ENCODE measurements at regions of chr7 and their contacts with region 1.

Region 1: DNA sequence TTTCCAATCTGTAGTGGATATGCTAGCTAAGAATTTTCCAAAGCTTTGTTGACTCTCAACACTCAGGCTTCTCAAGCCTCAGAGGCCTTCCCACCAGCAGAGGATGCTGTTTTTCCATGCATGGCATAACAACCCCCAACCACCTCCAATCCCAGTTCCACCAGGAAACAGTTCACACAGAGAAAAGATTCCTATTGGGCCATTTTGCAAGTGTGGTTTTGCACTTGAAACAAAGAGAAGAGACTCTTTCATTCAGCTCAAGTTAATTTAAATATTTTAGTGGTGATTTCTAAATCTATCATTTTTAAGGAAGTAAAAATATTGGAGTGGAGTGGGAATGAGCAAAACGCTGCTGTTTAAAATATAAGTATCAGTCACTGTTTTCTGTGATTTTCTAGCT is 105.6 kb upstream of the COL1A2 start:
- DNase-seq: peak; percentile 80
- H3K4me3 ChIP-seq: no peak overlapping the region
- H3K27ac ChIP-seq: no peak overlapping the region
- H3K27me3 ChIP-seq: no peaks in the 10 kb centered on the region
- CTCF ChIP-seq: peak; percentile 100

Region 2: GRCh38 chr7:94095316-94096009 is 193.6 kb before region 1 on chr7:
- CTCF ChIA-PET with region 1: no interaction called
- POLR2A ChIA-PET with region 1: no interaction called
- DNase-seq: no peak
- H3K4me3 ChIP-seq: no peak overlapping the region
- H3K27ac ChIP-seq: no peak overlapping the region
- H3K27me3 ChIP-seq: no peaks in the 10 kb centered on the region
- CTCF ChIP-seq: no peak

Region 3: GRCh38 chr7:94142281-94142680 is 146.8 kb before region 1 on chr7:
- CTCF ChIA-PET with region 1: no interaction called
- POLR2A ChIA-PET with region 1: no interaction called
- DNase-seq: no peak
- H3K4me3 ChIP-seq: no peak overlapping the region
- H3K27ac ChIP-seq: no peak overlapping the region
- H3K27me3 ChIP-seq: no peaks in the 10 kb centered on the region
- CTCF ChIP-seq: no peak

Region 4: DNA sequence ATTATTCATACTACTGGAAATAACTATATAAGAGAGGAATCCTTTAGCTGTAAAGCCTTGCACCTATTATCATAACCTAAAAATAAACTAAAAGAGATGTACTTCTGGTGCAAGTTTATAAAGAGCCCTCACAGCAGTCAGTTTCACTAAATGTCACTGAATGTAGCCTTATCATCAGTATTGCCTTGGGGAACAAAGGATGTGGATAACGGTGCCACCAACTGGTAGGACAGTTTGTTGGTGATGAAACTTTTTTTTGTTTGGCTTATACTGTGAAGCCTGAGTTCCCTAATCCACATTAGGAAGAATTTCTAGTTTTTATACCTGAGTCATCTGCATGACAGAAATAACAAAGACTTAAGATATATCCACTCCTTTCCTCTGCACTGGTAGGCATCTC is 12.3 kb before region 1 on chr7:
- CTCF ChIA-PET with region 1: interaction called, 14 read pairs
- POLR2A ChIA-PET with region 1: no interaction called
- DNase-seq: no peak
- H3K4me3 ChIP-seq: no peak overlapping the region
- H3K27ac ChIP-seq: no peak overlapping the region
- H3K27me3 ChIP-seq: no peaks in the 10 kb centered on the region
- CTCF ChIP-seq: peak; percentile 41

Region 5: DNA sequence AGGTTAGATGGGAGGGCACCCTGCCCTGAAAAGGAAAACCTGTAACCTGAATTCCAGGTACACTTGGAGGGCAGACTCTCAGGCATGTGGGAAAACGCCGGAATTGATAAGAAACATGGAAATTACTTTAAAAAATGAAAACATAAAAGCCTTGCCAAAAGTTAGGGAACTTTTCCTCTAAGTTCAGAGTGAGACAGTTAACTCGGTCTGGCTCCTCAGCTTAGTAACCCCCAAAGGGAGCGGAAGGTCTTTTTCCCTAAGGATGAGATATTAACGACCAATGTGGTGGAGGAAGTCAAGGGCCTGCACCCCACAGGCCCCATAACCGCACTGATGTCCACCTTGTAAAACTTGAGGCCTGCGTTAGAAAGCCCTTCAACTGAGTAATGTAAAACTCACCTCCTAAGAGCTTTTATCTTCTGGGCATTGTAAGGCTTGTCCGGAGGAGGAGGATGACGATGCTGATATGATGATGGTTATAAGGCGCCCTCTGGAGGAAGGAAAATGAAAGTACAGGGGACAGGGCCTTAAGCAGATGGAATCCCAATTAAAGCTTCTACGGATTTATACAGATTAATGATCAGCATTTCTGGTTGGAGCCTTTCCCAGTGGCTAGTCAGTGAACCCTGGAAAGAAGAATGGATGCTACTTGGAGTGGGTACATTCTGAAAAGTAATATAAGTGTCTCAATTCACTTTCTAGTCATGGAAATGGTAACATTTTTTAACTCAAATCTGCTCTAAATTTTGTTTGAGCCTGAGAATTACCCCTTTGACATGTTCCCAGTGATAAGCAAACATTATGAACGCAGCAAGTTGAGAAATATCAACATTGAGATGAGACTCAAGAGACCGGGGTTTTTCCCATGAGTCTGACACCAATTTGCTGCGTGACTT is 106.3 kb after region 1 on chr7:
- CTCF ChIA-PET with region 1: interaction called, 482 read pairs
- POLR2A ChIA-PET with region 1: interaction called, 450 read pairs
- DNase-seq: peak; percentile 64
- H3K4me3 ChIP-seq: peak overlapping the region; percentile 96
- H3K27ac ChIP-seq: peak overlapping the region; percentile 98
- H3K27me3 ChIP-seq: no peaks in the 10 kb centered on the region
- CTCF ChIP-seq: peak; percentile 77

Region 6: GRCh38 chr7:94414481-94414880 is 125.4 kb after region 1 on chr7:
- CTCF ChIA-PET with region 1: interaction called, 14 read pairs
- POLR2A ChIA-PET with region 1: interaction called, 51 read pairs
- DNase-seq: no peak
- H3K4me3 ChIP-seq: no peak overlapping the region
- H3K27ac ChIP-seq: no peak overlapping the region
- H3K27me3 ChIP-seq: no peaks in the 10 kb centered on the region
- CTCF ChIP-seq: no peak

Region 7: DNA sequence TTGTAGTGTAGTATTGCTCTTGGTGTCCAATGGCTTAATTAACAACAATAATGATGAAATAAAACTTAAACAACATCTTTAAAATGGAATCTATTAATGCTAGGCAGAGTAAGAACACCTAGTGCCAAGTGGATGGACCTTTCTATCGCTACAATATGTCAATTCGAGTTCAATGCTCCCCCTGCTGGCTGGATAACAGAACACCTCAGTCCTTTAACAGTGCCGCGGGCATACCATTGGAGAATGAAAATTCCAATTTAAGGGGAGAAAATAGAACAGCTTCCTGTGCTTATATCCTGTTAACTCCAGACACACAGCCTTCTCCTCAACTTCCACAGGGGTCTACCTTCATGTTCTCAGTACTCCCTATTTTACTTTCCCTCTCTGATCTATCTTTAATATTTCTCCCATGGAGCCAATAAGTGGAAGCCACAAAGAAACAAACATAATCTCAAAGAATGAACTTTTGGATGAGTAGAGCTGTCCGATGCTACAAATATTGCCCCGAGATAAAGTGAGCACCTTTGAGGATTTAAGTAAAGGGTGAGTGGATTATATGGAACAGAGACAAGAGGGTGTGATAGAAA is 147.0 kb after region 1 on chr7:
- CTCF ChIA-PET with region 1: interaction called, 539 read pairs
- POLR2A ChIA-PET with region 1: interaction called, 5 read pairs
- DNase-seq: no peak
- H3K4me3 ChIP-seq: no peak overlapping the region
- H3K27ac ChIP-seq: no peak overlapping the region
- H3K27me3 ChIP-seq: no peaks in the 10 kb centered on the region
- CTCF ChIP-seq: peak; percentile 82

Region 8: DNA sequence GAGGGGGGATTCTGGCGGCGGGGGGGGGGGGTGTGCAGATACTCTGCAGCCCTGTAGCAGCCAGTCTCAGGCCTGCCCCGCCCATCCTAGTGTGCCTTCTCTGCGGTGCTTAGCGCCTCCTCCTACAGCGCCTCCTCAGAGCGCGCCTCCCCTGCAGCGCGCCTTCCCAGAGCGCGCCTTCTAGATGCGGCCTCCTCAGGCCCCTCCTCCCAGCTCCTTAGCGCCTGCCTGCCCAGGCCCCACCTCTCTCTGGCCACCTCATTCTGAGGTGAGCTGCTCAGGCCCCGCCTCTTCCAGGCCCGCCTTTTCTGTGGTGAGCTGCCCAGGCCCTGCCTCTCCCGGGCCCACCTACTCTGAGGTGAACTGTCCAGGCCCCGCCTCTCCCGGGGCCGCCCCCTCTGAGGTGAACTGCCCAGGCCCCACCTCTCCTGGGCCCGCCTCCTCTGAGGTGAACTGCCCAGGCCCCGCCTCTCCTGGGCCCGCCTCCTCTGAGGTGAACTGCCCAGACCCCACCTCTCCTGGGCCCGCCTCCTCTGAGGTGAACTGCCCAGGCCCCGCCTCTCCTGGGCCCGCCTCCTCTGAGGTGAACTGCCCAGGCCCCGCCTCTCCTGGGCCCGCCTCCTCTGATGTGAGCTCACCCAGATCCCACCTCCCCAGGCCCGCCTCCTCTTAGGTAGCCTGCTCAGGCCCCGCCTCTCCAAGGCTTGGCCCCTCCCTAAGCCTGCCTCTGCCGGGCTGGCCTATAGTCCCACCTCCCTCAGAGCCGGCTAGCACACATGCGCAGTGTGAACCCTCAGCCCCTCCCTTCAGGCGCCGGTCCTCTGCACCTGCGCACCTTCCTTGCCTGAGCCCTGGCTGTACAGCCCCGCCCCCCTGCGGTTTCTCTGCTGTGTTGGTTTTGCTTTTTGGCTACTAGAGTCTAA is 369.0 kb after region 1 on chr7:
- CTCF ChIA-PET with region 1: interaction called, 20 read pairs
- POLR2A ChIA-PET with region 1: interaction called, 5 read pairs
- DNase-seq: peak; percentile 73
- H3K4me3 ChIP-seq: peak overlapping the region; percentile 62
- H3K27ac ChIP-seq: no peak overlapping the region
- H3K27me3 ChIP-seq: no peaks in the 10 kb centered on the region
- CTCF ChIP-seq: no peak

Measured in AG04450 (cell line).